ENCODE measurements at regions of chr3 and their contacts with region 1.

Region 1: GRCh38 chr3:60250206-60250605 is 1001.0 kb downstream of the FHIT start:
- DNase-seq: no peak
- H3K4me3 ChIP-seq: no peak overlapping the region
- H3K27ac ChIP-seq: no peak overlapping the region
- H3K4me1 ChIP-seq: no peaks in the 10 kb centered on the region
- H3K27me3 ChIP-seq: no peaks in the 10 kb centered on the region
- CTCF ChIP-seq: no peak
- POLR2A ChIP-seq: no peak

Region 2: DNA sequence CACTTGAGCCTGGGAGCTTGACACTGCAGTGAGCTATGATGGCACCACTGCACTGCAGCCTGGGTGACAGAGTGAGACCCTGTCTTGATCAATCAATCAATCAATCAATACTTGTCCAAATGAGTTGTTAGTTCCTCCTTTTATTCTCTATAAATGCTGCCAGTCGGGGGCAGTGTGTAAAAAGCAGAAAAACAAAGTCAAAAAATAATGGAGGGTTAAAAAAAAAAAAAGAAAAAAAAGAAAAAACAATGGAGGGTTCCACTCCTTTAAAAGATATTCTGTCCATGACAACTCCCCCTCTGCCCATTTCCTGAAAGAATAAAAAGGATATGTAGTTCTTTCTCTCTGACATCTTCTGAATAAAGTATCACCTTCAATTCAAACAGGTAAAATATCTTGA is 67.5 kb before region 1 on chr3:
- intact Hi-C with region 1: no loop called
- DNase-seq: no peak
- H3K4me3 ChIP-seq: no peak overlapping the region
- H3K27ac ChIP-seq: no peak overlapping the region
- H3K4me1 ChIP-seq: no peaks in the 10 kb centered on the region
- H3K27me3 ChIP-seq: no peaks in the 10 kb centered on the region
- CTCF ChIP-seq: no peak
- POLR2A ChIP-seq: no peak

Region 3: GRCh38 chr3:60277361-60277800 is 27.2 kb after region 1 on chr3:
- intact Hi-C with region 1: no loop called
- DNase-seq: no peak
- H3K4me3 ChIP-seq: no peak overlapping the region
- H3K27ac ChIP-seq: no peak overlapping the region
- H3K4me1 ChIP-seq: no peaks in the 10 kb centered on the region
- H3K27me3 ChIP-seq: no peaks in the 10 kb centered on the region
- CTCF ChIP-seq: no peak
- POLR2A ChIP-seq: no peak

Region 4: DNA sequence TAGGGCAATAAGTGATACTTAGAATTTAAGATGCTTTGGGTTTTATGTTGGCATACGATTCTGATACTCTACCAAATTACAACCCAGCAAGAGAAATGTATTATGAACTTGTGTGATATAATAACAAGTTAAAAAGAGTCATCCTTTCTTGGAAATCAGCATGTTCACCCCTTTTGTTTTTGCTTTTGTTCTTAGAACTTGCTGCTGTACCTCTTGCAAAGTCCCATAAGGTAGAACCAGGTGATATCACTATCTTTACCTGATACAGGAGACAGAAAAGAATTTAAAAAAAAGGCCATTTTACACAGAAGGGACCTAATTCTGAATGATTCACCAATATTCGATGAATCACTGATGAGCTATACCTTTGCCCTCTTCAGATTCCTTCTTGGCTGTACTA is 190.7 kb after region 1 on chr3:
- intact Hi-C with region 1: no loop called
- DNase-seq: no peak
- H3K4me3 ChIP-seq: no peak overlapping the region
- H3K27ac ChIP-seq: no peak overlapping the region
- H3K4me1 ChIP-seq: no peaks in the 10 kb centered on the region
- H3K27me3 ChIP-seq: no peaks in the 10 kb centered on the region
- CTCF ChIP-seq: no peak
- POLR2A ChIP-seq: no peak

Region 5: GRCh38 chr3:60696428-60697125 is 446.4 kb after region 1 on chr3:
- intact Hi-C with region 1: loop called (anchors 10 kb)
- DNase-seq: no peak
- H3K4me3 ChIP-seq: no peak overlapping the region
- H3K27ac ChIP-seq: no peak overlapping the region
- H3K4me1 ChIP-seq: no peaks in the 10 kb centered on the region
- H3K27me3 ChIP-seq: no peaks in the 10 kb centered on the region
- CTCF ChIP-seq: no peak
- POLR2A ChIP-seq: no peak

Measured in vagina (tissue), 2 donors.